ENCODE measurements at regions of chr6 and their contacts with region 1.

Region 1: GRCh38 chr6:163956571-163957407 is 542.3 kb downstream of the QKI start:
- DNase-seq: peak; percentile 47 to 70
- ATAC-seq: peak; percentile 75 to 97 (median 92)
- H3K4me3 ChIP-seq: no peak overlapping the region
- H3K4me3 Mint-ChIP-seq: peak overlapping the region; percentile 21
- H3K27ac ChIP-seq: no peak overlapping the region
- H3K27ac Mint-ChIP-seq: no peak overlapping the region
- H3K4me1 ChIP-seq: no peaks in the 10 kb centered on the region
- H3K4me1 Mint-ChIP-seq: peaks cover 15 to 20% of the 10 kb centered on the region in 2 donors
- H3K27me3 ChIP-seq: peaks cover 6% of the 10 kb centered on the region
- H3K27me3 Mint-ChIP-seq: peaks cover 30 to 41% of the 10 kb centered on the region in 2 donors
- CTCF ChIP-seq: peak; percentile 90

Region 2: DNA sequence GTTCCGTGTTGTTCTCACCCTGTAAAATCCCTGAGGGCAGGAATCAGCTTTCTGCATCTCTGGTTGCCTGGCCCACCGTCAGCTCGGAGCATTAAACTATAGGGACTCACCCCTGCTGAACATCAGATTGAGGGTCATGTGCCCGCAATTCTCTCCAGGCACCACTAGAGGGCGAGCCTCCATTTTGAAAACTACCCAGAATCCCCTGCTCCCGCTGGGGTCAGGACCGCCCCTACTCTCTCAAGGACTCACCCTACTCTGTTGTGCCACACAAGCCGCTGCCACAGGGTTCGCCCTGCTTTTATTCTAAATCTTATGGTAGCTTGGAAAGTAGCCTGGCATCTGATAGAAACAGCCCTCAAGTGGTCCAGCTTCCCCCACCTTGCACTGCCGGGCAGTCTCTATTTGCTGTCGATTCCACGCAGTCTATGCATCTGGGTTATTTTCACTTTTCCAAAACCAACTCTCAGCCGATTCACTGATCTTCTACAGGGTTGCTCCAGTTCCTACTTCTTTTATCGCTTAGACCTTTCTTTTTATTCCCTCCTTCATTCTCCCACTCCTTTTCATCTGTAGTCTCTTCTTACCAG is 786.4 kb before region 1 on chr6:
- intact Hi-C with region 1: loop called (anchors 2 kb)
- DNase-seq: peak in 1 of 2 donors; percentile 36
- ATAC-seq: peak in 2 of 3 donors; percentile 67 to 68
- H3K4me3 ChIP-seq: no peak overlapping the region
- H3K4me3 Mint-ChIP-seq: no peak overlapping the region
- H3K27ac ChIP-seq: no peak overlapping the region
- H3K27ac Mint-ChIP-seq: no peak overlapping the region
- H3K4me1 ChIP-seq: no peaks in the 10 kb centered on the region
- H3K4me1 Mint-ChIP-seq: no peaks in the 10 kb centered on the region
- H3K27me3 ChIP-seq: no peaks in the 10 kb centered on the region
- H3K27me3 Mint-ChIP-seq: peaks cover 6 to 7% of the 10 kb centered on the region in 2 donors
- CTCF ChIP-seq: peak; percentile 74

Region 3: GRCh38 chr6:163180874-163181541 is 775.8 kb before region 1 on chr6:
- intact Hi-C with region 1: loop called (anchors 1 kb)
- DNase-seq: peak in 1 of 2 donors; percentile 9
- ATAC-seq: no peak
- H3K4me3 ChIP-seq: no peak overlapping the region
- H3K4me3 Mint-ChIP-seq: no peak overlapping the region
- H3K27ac ChIP-seq: no peak overlapping the region
- H3K27ac Mint-ChIP-seq: no peak overlapping the region
- H3K4me1 ChIP-seq: no peaks in the 10 kb centered on the region
- H3K4me1 Mint-ChIP-seq: no peaks in the 10 kb centered on the region
- H3K27me3 ChIP-seq: no peaks in the 10 kb centered on the region
- H3K27me3 Mint-ChIP-seq: peaks cover 14 to 26% of the 10 kb centered on the region in 2 donors
- CTCF ChIP-seq: no peak

Region 4: GRCh38 chr6:163427498-163428254 is 529.1 kb before region 1 on chr6:
- intact Hi-C with region 1: loop called (anchors 1 kb)
- DNase-seq: peak in 1 of 2 donors; percentile 61
- ATAC-seq: peak in 2 of 3 donors; percentile 48 to 53
- H3K4me3 ChIP-seq: no peak overlapping the region
- H3K4me3 Mint-ChIP-seq: no peak overlapping the region
- H3K27ac ChIP-seq: no peak overlapping the region
- H3K27ac Mint-ChIP-seq: no peak overlapping the region
- H3K4me1 ChIP-seq: peaks cover 6% of the 10 kb centered on the region
- H3K4me1 Mint-ChIP-seq: peaks cover 40 to 70% of the 10 kb centered on the region in 2 donors
- H3K27me3 ChIP-seq: no peaks in the 10 kb centered on the region
- H3K27me3 Mint-ChIP-seq: no peaks in the 10 kb centered on the region
- CTCF ChIP-seq: peak; percentile 53

Region 5: GRCh38 chr6:163667372-163668060 is 289.3 kb before region 1 on chr6:
- intact Hi-C with region 1: loop called (anchors 5 kb)
- DNase-seq: peak in 1 of 2 donors; percentile 35
- ATAC-seq: peak; percentile 90 to 98 (median 94)
- H3K4me3 ChIP-seq: no peak overlapping the region
- H3K4me3 Mint-ChIP-seq: peak overlapping the region; percentile 73
- H3K27ac ChIP-seq: peak overlapping the region; percentile 49
- H3K27ac Mint-ChIP-seq: peak overlapping the region; percentile 69 to 88
- H3K4me1 ChIP-seq: peaks cover 18% of the 10 kb centered on the region
- H3K4me1 Mint-ChIP-seq: peaks cover 14 to 21% of the 10 kb centered on the region in 2 donors
- H3K27me3 ChIP-seq: no peaks in the 10 kb centered on the region
- H3K27me3 Mint-ChIP-seq: peaks cover 0 to 3% of the 10 kb centered on the region in 2 donors
- CTCF ChIP-seq: no peak

Region 6: GRCh38 chr6:163872335-163872734 is 84.5 kb before region 1 on chr6:
- intact Hi-C with region 1: no loop called
- DNase-seq: no peak
- ATAC-seq: no peak
- H3K4me3 ChIP-seq: no peak overlapping the region
- H3K4me3 Mint-ChIP-seq: no peak overlapping the region
- H3K27ac ChIP-seq: no peak overlapping the region
- H3K27ac Mint-ChIP-seq: no peak overlapping the region
- H3K4me1 ChIP-seq: no peaks in the 10 kb centered on the region
- H3K4me1 Mint-ChIP-seq: peaks cover 0 to 4% of the 10 kb centered on the region in 2 donors
- H3K27me3 ChIP-seq: no peaks in the 10 kb centered on the region
- H3K27me3 Mint-ChIP-seq: peaks cover 5 to 13% of the 10 kb centered on the region in 2 donors
- CTCF ChIP-seq: no peak

Region 7: GRCh38 chr6:163922562-163922961 is 34.2 kb before region 1 on chr6:
- intact Hi-C with region 1: no loop called
- DNase-seq: no peak
- ATAC-seq: no peak
- H3K4me3 ChIP-seq: no peak overlapping the region
- H3K4me3 Mint-ChIP-seq: no peak overlapping the region
- H3K27ac ChIP-seq: no peak overlapping the region
- H3K27ac Mint-ChIP-seq: no peak overlapping the region
- H3K4me1 ChIP-seq: no peaks in the 10 kb centered on the region
- H3K4me1 Mint-ChIP-seq: no peaks in the 10 kb centered on the region
- H3K27me3 ChIP-seq: no peaks in the 10 kb centered on the region
- H3K27me3 Mint-ChIP-seq: peaks cover 8 to 22% of the 10 kb centered on the region in 2 donors
- CTCF ChIP-seq: no peak

Region 8: DNA sequence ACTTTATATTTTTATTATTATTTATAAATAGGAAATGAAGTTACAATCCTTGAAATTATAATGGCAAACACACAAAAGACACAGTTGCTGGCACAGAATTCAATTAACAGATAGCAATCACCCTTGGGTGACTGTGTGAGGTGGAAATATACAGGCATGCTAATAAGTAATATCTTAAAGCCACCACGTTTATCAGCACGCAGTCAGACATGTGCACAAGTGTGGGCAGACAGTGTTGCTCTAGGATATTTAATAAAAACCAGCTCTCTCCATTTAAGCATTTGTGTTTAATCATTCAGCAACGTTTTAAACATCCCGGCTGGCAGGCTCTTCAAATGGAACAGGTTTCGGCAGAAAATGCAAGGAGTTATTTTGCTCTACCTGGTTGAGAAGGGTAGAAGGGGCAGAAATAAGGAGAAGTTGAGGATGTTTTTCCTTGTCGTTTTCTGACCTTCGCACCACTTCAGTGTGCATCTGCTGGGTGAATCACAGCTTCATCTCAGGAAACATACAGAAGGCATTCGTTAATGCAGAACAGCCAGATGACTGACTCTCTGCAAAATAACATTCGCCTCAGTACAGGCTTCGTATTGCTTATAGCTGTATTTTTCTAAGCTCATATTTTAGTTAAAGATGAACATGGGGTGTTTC is 42.8 kb after region 1 on chr6:
- intact Hi-C with region 1: no loop called
- DNase-seq: no peak
- ATAC-seq: no peak
- H3K4me3 ChIP-seq: no peak overlapping the region
- H3K4me3 Mint-ChIP-seq: no peak overlapping the region
- H3K27ac ChIP-seq: no peak overlapping the region
- H3K27ac Mint-ChIP-seq: no peak overlapping the region
- H3K4me1 ChIP-seq: no peaks in the 10 kb centered on the region
- H3K4me1 Mint-ChIP-seq: no peaks in the 10 kb centered on the region
- H3K27me3 ChIP-seq: no peaks in the 10 kb centered on the region
- H3K27me3 Mint-ChIP-seq: peaks cover 6 to 27% of the 10 kb centered on the region in 2 donors
- CTCF ChIP-seq: no peak

Measured in natural killer cell (primary cell).